GM18951 (cell line): ENCODE measurements at regions of chr5 and their contacts with region 1.

Region 1: DNA sequence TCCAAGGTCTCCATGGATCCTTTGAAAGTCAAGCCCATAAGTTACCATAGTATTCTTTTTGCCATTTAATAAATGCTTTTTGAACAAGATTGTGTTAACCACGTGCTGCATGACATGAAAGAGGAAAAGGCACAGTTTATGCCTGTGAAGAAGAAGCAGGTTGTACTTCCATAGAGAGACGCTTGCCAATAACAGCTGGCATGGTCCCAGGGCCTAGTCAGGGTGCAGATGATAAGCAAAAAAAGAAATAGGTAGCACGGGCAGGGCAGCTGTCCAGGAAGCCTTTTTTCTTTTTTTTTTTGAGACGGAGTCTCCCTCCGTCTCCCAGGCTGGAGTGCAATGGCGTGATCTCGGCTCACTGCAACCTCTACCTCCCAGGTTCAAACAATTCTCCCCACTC is 71.8 kb upstream of the CLINT1 start:
- POLR2A ChIP-seq: no peak

Region 2: DNA sequence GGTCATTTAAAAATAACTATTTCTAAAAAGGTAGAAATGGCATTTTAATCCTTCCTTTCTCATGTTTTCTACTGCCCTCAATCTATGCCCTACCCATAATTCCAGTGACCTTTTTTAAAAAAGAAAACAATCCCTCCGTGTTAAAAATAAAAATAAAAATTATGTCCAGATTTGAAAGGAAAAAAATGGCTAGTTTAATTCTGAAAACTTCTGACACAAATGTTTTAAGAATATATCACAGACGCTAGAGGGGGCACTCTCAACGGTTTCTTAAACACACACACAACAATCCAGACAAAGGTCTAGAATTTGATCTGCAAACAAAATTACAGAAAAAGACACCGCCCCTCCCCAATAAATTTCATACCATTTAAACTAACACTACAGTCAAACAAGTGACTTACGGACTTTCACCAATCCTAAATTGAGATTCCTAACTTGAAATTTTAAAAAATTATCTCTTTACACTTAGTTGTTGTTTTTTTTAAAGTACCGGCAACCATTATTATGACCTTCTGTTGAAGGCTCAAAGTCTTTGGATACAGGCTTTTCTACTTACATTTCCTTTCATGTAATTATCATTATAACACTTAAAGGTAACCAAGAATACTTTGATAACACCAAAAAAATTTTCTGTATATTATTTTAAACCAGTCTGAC is 110.0 kb before region 1 on chr5:
- in situ Hi-C with region 1: loop called (anchors 10 kb)
- POLR2A ChIP-seq: no peak

Region 3: GRCh38 chr5:158174918-158175851 is 244.5 kb after region 1 on chr5:
- in situ Hi-C with region 1: no loop called
- POLR2A ChIP-seq: no peak

Region 4: DNA sequence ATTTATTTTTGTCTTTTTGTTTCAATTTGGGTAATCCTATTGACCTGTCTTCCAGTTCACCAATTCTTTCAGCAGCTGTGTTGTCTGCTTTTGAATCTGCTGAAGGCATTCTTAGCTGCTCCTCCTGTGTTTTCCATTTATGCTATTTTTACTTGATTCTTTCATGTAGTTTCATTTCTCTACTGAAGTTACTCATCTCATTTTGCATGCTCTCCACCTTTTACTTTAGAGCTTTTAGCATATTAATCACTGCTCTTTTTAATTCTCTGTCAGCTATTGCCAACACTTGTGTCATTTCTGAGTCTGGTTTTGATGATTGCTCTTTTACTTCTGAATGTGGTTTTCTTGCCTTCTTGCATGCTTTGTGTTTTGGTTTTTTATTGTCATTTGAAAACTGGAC is 424.2 kb after region 1 on chr5:
- in situ Hi-C with region 1: no loop called
- POLR2A ChIP-seq: no peak